ENCODE measurements at regions of chr12 and their contacts with region 1.

Region 1: GRCh38 chr12:40622246-40622838 is 69.9 kb upstream of the CNTN1 start:
- H3K4me3 ChIP-seq: no peak overlapping the region
- H3K27ac ChIP-seq: no peak overlapping the region
- H3K4me1 ChIP-seq: no peaks in the 10 kb centered on the region
- CTCF ChIP-seq: peak; percentile 21; the same call in 1 of the 2 replicates

Region 2: DNA sequence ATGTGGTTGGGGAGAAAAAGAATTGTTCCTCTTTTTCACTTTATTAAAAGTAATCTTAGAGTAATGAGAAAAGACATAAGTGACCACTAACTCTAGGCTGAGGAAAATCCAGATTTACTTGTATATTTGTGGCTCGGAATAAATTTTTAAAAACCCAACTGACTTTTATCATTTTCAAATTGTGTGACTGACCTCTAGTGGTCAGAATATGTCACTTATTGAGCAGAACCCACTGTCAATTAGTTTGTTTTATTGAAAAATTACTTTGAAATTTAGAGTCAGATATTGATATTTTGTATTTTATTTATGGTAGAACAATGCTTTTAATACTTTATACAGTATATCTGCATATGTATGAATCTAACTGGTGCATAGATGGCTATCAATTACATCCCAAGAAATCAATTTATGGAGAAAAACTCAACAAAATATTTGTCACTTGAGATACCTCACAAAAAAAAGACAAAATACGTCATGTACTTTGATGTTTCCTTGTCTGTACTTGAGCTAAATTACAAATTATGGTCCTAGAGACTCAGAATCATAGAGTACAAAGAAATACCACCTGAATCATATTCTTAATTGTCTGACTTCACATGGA is 299.3 kb after region 1 on chr12:
- CTCF ChIA-PET with region 1: interaction called, 15 read pairs
- POLR2A ChIA-PET with region 1: no interaction called
- H3K4me3 ChIP-seq: no peak overlapping the region
- H3K27ac ChIP-seq: no peak overlapping the region
- H3K4me1 ChIP-seq: no peaks in the 10 kb centered on the region
- CTCF ChIP-seq: no peak

Measured in HEK293 (cell line).